Activated naive CD4-positive, alpha-beta T cell treated with anti-CD3 and anti-CD28 coated beads for 36 hours (primary cell): ENCODE measurements at regions of chr6 and their contacts with region 1.

Region 1: GRCh38 chr6:24581084-24581669 is 64.8 kb downstream of the KIAA0319 start:
- DNase-seq: peak; percentile 91
- H3K4me3 Mint-ChIP-seq: no peak overlapping the region
- H3K27ac Mint-ChIP-seq: no peak overlapping the region
- H3K4me1 Mint-ChIP-seq: peaks cover 2% of the 10 kb centered on the region
- H3K27me3 Mint-ChIP-seq: peaks cover 3% of the 10 kb centered on the region

Region 2: DNA sequence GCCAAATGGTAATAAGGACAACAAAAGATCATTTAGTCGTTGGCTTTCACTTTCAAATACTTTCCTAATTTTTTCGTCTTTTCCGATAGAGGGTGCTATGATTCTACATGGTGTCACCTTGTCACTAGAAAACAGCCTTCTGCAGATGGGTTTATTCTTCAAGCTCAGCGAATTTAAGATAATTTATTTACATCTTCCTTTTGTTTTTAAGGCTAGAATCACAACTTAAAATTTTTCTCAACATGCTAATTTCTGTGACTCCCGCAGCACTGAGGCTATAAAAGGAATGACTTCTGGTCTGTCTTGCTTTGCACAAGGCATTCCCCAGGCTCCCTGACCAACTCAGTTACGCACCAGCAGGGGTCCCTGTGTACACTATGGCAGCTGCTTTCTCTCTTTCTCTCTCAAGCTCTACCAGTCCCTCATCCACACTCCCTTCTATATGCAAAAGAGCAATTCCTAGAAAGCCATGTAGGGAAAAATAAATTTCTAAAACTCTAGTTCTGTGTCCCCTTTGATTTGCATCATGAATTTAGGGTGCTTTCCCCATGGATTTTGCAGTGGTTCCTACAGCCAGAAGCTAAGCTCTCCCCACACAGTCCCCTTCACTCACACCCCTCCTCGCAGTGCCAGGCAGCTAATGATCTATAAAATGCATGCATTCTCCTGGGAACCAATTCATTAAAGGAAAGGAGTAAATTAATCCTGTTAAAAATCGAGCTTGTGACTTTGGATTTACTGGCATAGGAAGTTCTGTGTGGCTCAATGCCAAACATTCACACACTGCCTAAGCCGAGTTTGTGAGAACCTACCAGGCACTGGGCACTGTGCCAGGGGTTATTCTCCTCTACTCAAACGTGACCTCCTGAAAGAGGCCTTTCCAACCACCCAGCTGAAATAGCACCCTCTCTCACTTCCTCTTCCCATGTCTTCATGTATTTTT is 297.9 kb before region 1 on chr6:
- CTCF ChIA-PET with region 1: no interaction called
- intact Hi-C with region 1: loop called (anchors 10 kb)
- DNase-seq: peak; percentile 62
- H3K4me3 Mint-ChIP-seq: no peak overlapping the region
- H3K27ac Mint-ChIP-seq: no peak overlapping the region
- H3K4me1 Mint-ChIP-seq: peaks cover 6% of the 10 kb centered on the region
- H3K27me3 Mint-ChIP-seq: peaks cover 3% of the 10 kb centered on the region

Region 3: GRCh38 chr6:24520929-24521546 is 60.1 kb before region 1 on chr6:
- CTCF ChIA-PET with region 1: interaction called, 4 read pairs
- intact Hi-C with region 1: loop called (anchors 1 kb)
- DNase-seq: peak; percentile 62
- H3K4me3 Mint-ChIP-seq: no peak overlapping the region
- H3K27ac Mint-ChIP-seq: no peak overlapping the region
- H3K4me1 Mint-ChIP-seq: peaks cover 8% of the 10 kb centered on the region
- H3K27me3 Mint-ChIP-seq: no peaks in the 10 kb centered on the region

Region 4: GRCh38 chr6:24595512-24596217 is 14.5 kb after region 1 on chr6:
- CTCF ChIA-PET with region 1: interaction called, 12 read pairs
- intact Hi-C with region 1: no loop called
- DNase-seq: no peak
- H3K4me3 Mint-ChIP-seq: no peak overlapping the region
- H3K27ac Mint-ChIP-seq: no peak overlapping the region
- H3K4me1 Mint-ChIP-seq: no peaks in the 10 kb centered on the region
- H3K27me3 Mint-ChIP-seq: no peaks in the 10 kb centered on the region

Region 5: DNA sequence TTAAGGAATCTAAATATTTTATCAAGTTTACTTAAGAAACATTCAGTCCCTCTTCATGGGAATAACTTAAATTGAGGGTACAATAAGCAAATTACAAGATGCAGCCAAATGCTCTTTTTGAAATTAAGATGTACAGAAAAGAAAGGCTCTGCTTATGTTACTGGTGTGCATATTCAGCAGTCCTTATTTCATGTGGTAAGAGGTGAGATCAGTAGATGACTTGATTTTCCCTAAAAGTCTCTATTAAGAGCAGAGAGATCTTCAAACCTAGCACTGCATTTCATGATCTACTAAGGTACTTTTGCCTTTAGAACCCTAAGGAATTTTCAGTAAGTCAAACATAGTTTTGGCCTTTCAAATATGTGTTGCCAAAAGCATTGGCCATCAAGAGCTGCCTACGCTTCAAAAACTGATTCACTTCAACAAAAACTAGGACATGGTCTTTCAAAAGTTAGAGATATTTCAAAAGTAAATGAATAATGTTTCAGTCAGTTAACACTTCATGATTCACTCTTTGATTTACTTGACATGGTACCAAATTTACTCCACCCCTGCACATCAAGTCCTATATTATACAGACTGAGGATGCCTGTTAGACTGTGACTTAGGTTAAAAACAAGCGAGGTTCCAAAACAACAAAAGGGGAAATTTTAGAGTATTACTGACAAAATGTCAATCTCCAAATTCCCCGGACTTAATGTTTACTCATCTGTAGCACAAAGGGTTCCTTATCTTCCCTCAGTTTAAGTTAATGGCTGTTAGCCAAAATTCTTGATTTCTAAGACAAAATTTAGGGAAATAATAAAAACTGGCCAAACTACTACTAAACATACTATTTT is 118.6 kb after region 1 on chr6:
- CTCF ChIA-PET with region 1: interaction called, 100 read pairs
- intact Hi-C with region 1: loop called (anchors 1 kb)
- DNase-seq: no peak
- H3K4me3 Mint-ChIP-seq: no peak overlapping the region
- H3K27ac Mint-ChIP-seq: peak overlapping the region; percentile 84
- H3K4me1 Mint-ChIP-seq: peaks cover 45% of the 10 kb centered on the region
- H3K27me3 Mint-ChIP-seq: no peaks in the 10 kb centered on the region

Region 6: GRCh38 chr6:24831771-24832716 is 250.9 kb after region 1 on chr6:
- CTCF ChIA-PET with region 1: no interaction called
- intact Hi-C with region 1: loop called (anchors 5 kb)
- DNase-seq: peak; percentile 12
- H3K4me3 Mint-ChIP-seq: no peak overlapping the region
- H3K27ac Mint-ChIP-seq: peak overlapping the region; percentile 56
- H3K4me1 Mint-ChIP-seq: peaks cover 47% of the 10 kb centered on the region
- H3K27me3 Mint-ChIP-seq: no peaks in the 10 kb centered on the region

Region 7: GRCh38 chr6:25070547-25071366 is 489.6 kb after region 1 on chr6:
- CTCF ChIA-PET with region 1: interaction called, 5 read pairs
- intact Hi-C with region 1: loop called (anchors 1 kb)
- DNase-seq: peak; percentile 91
- H3K4me3 Mint-ChIP-seq: peak overlapping the region; percentile 38
- H3K27ac Mint-ChIP-seq: peak overlapping the region; percentile 70
- H3K4me1 Mint-ChIP-seq: peaks cover 10% of the 10 kb centered on the region
- H3K27me3 Mint-ChIP-seq: no peaks in the 10 kb centered on the region